SK-MEL-5 (cell line): ENCODE measurements at regions of chr1 and their contacts with region 1.

Region 1: DNA sequence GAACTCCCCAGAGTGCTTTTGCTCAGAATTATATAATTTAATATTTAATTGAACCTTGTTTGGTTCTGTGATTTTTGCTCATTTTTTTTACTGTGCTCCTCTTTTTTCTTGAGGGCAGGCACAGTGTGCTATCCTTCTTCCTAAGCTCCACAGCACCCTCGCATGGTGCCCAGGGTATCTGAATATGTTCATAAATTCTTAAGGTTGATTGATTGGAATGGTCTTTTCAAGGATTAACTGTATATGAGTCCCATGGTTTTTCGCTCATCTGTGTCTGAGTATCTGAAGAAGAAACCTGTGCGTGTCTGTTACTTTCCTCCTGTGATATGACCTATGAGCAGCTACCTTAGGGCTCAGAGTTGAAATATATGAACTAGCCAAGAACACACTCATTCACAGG is 393.7 kb downstream of the HLX start:
- DNase-seq: peak; percentile 52

Region 2: GRCh38 chr1:221435504-221435904 is 162.6 kb after region 1 on chr1:
- in situ Hi-C with region 1: loop called (anchors 10 kb)
- DNase-seq: peak; percentile 73